ENCODE measurements at regions of chr12 and their contacts with region 1.

Region 1: DNA sequence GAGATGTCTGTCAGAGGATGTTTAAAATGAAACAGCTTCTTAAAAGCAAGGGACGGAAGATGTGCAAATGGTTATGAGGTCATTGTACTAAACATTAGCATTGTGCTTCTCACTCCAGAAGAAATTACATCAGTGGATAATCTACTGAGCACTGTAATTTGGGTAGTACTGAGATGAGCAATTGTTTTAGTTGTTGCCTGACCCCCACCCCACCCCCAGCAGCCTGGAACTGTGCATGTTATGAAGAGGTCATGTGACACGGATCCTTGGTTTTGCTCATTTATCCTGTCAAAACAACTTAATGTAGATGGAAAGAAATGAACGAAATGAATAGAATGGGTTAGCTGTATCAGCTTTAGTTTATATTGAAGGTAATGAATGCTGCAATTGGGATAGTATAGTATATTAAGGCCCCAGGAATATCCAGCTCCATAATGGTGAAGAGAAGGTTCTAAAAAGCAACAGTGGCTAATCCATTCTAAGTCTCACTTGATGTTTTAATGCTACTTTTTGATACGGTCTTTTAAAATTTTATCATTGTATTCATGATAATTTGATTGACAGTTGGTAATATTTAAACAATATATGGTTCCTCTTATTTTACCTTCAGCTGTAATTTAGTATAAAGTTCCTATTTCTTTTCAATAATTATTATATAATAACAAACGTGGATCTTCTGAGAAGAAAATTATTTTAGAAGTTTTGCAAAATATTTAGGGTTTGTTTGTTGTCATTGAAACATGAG is 58.5 kb downstream of the WNK1 start:
- DNase-seq: no peak
- H3K4me3 ChIP-seq: no peak overlapping the region
- H3K27ac ChIP-seq: no peak overlapping the region
- H3K4me1 ChIP-seq: peaks cover 8 to 55% (median 31%) of the 10 kb centered on the region in 4 donors
- H3K27me3 ChIP-seq: no peaks in the 10 kb centered on the region
- CTCF ChIP-seq: no peak
- EP300 ChIP-seq: no peak
- POLR2A ChIP-seq: no peak

Region 2: DNA sequence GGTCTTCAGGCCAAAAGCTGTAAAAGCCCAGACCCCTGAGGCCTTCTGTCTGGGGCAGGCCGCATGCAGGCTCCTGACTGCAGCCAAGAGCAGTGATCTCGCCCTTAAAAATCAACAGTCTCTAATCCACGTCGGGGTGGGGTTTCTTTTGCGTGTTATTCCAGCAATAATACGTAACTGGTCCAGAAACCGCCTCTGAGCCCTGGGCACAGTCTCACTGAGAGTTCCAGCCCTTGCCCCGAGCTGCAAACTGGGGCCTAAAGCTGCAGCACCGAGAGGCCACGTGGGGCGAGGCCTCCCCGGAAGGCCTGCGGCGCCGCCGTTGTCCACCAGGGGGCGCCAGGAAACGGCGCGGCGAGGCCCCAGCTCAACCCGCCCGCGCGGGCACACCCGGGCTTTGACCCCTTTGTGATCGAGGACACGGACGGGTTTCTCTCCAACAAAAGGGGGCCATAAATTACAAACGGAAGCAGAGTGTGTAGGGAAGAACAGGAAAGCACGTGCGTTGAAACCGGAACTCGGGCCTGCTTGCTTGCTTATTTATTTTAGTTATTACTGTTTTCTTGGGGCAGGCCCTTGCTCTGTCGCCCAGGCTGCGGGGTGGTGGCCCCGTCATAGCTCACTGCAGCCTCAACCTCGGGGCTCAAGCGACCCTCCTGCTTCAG is 234.8 kb before region 1 on chr12:
- intact Hi-C with region 1: loop called (anchors 10 kb)
- DNase-seq: peak; percentile 82 to 91
- H3K4me3 ChIP-seq: peak overlapping the region in 3 of 4 donors; percentile 3 to 14 (median 10)
- H3K27ac ChIP-seq: peak overlapping the region; percentile 9 to 80 (median 61)
- H3K4me1 ChIP-seq: peaks cover 18 to 56% (median 39%) of the 10 kb centered on the region in 4 donors
- H3K27me3 ChIP-seq: no peaks in the 10 kb centered on the region
- CTCF ChIP-seq: peak in 6 of 7 experiments; percentile 56 to 100 (median 98)
- EP300 ChIP-seq: no peak
- POLR2A ChIP-seq: no peak

Region 3: GRCh38 chr12:751192-751998 is 59.4 kb before region 1 on chr12:
- intact Hi-C with region 1: loop called (anchors 10 kb)
- DNase-seq: peak; percentile 92 to 98
- H3K4me3 ChIP-seq: peak overlapping the region; percentile 77 to 94 (median 90)
- H3K27ac ChIP-seq: peak overlapping the region; percentile 86 to 99 (median 99)
- H3K4me1 ChIP-seq: peaks cover 12 to 44% (median 36%) of the 10 kb centered on the region in 4 donors
- H3K27me3 ChIP-seq: no peaks in the 10 kb centered on the region
- CTCF ChIP-seq: peak in 5 of 7 experiments; percentile 53 to 78 (median 60)
- EP300 ChIP-seq: no peak
- POLR2A ChIP-seq: no peak

Measured in stomach (tissue), 19 donors.